ENCODE measurements at regions of chr14 and their contacts with region 1.

Region 1: GRCh38 chr14:84783511-84783910 is 746.4 kb upstream of the FLRT2 start:
- DNase-seq: no peak
- H3K4me3 ChIP-seq: no peak overlapping the region
- H3K27ac ChIP-seq: no peak overlapping the region
- H3K4me1 ChIP-seq: no peaks in the 10 kb centered on the region
- H3K27me3 ChIP-seq: no peaks in the 10 kb centered on the region
- CTCF ChIP-seq: no peak

Region 2: GRCh38 chr14:83899706-83900105 is 883.8 kb before region 1 on chr14:
- intact Hi-C with region 1: loop called (anchors 5 kb)
- DNase-seq: no peak
- H3K4me3 ChIP-seq: no peak overlapping the region
- H3K27ac ChIP-seq: no peak overlapping the region
- H3K4me1 ChIP-seq: no peaks in the 10 kb centered on the region
- H3K27me3 ChIP-seq: no peaks in the 10 kb centered on the region
- CTCF ChIP-seq: no peak

Region 3: GRCh38 chr14:84555493-84555892 is 228.0 kb before region 1 on chr14:
- intact Hi-C with region 1: no loop called
- DNase-seq: no peak
- H3K4me3 ChIP-seq: no peak overlapping the region
- H3K27ac ChIP-seq: no peak overlapping the region
- H3K4me1 ChIP-seq: no peaks in the 10 kb centered on the region
- H3K27me3 ChIP-seq: no peaks in the 10 kb centered on the region
- CTCF ChIP-seq: no peak

Measured in left ventricle myocardium inferior (tissue), 1 donor.